ENCODE measurements at regions of chr6 and their contacts with region 1.

Region 1: GRCh38 chr6:99520855-99521632 is 5.8 kb upstream of the USP45 start:
- DNase-seq: peak; percentile 52
- H3K4me3 ChIP-seq: peak overlapping the region; percentile 96
- H3K27ac ChIP-seq: peak overlapping the region; percentile 80
- H3K27me3 ChIP-seq: no peaks in the 10 kb centered on the region
- CTCF ChIP-seq: peak; percentile 91

Region 2: DNA sequence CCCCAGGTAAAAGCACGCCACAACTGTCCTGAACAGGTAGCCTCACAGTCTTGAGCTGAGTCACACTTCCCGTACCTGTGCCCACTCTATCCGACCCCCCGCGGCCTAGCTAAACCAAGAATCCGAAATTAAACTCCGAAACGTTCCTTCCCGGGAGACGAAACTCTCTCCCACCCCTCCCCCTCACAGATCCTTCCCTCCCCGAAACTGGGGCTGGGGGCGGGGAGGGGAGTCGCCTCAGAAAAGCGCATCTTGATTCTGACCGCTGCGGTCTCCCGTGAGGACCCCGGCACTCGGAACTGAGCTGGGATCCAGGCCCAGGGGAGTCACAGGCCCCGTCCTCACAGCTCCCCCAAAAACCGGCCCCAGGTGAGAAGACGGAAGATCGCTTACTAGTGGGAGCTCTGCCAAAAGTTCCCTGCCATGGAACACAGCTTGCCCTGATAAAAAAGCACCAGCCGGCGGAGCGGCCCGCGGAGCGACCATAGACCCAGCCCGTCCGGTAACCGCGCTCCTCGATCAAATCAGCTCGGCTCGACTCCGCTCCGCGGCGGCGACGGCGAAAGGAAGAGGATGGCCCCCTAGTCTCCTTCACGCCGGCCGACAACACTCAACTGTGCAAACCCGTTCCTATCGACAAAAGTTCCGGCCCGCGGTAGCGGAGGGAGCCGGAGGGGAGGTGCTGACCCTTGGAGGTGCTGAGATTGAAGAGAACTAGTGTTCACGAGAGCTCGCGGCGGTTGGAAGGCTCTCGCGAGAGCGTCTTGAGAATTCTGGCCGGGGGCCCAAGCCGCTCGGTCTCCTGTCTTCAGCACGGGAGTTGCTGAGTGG is 47.3 kb after region 1 on chr6 and contains the start of gene CCNC:
- CTCF ChIA-PET with region 1: interaction called, 6 read pairs
- POLR2A ChIA-PET with region 1: interaction called, 12 read pairs
- DNase-seq: peak; percentile 90
- H3K4me3 ChIP-seq: peak within 1 kb of the TSS; percentile 90
- H3K27ac ChIP-seq: peak within 1 kb of the TSS; percentile 79
- H3K27me3 ChIP-seq: no peaks in the 10 kb centered on the region
- CTCF ChIP-seq: no peak
- polyA plus RNA-seq, gene CCNC: 54.9 and 68.4 TPM in 2 replicates

Measured in AG04450 (cell line).